ENCODE measurements at regions of chr5 and their contacts with region 1.

Region 1: GRCh38 chr5:59039296-59040023 is 456.6 kb downstream of the RAB3C start:
- DNase-seq: peak; percentile 90
- H3K4me3 Mint-ChIP-seq: peak overlapping the region; percentile 94
- H3K27ac Mint-ChIP-seq: peak overlapping the region; percentile 96
- H3K4me1 Mint-ChIP-seq: peaks cover 44% of the 10 kb centered on the region
- H3K27me3 Mint-ChIP-seq: no peaks in the 10 kb centered on the region

Region 2: DNA sequence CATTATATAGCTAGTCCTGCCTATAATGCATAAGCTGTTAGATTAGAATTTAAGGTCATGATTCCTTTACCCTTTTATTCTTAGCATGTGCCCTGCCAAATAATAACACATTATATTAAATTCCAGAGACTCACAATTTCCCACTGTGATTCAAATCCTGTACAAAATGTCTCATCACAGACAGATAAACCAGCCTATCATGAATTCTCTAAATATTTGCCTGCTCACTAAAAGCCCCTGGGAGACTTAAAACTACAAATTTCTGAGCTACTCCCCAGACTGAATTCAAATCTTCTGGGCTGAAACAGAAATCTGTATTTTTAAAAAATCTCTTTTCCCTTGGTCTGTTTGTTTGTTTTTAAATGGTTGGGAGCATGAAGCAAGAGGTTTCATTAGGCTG is 515.5 kb before region 1 on chr5:
- CTCF ChIA-PET with region 1: no interaction called
- intact Hi-C with region 1: no loop called
- DNase-seq: no peak
- H3K4me3 Mint-ChIP-seq: no peak overlapping the region
- H3K27ac Mint-ChIP-seq: no peak overlapping the region
- H3K4me1 Mint-ChIP-seq: no peaks in the 10 kb centered on the region
- H3K27me3 Mint-ChIP-seq: peaks cover 10% of the 10 kb centered on the region

Region 3: DNA sequence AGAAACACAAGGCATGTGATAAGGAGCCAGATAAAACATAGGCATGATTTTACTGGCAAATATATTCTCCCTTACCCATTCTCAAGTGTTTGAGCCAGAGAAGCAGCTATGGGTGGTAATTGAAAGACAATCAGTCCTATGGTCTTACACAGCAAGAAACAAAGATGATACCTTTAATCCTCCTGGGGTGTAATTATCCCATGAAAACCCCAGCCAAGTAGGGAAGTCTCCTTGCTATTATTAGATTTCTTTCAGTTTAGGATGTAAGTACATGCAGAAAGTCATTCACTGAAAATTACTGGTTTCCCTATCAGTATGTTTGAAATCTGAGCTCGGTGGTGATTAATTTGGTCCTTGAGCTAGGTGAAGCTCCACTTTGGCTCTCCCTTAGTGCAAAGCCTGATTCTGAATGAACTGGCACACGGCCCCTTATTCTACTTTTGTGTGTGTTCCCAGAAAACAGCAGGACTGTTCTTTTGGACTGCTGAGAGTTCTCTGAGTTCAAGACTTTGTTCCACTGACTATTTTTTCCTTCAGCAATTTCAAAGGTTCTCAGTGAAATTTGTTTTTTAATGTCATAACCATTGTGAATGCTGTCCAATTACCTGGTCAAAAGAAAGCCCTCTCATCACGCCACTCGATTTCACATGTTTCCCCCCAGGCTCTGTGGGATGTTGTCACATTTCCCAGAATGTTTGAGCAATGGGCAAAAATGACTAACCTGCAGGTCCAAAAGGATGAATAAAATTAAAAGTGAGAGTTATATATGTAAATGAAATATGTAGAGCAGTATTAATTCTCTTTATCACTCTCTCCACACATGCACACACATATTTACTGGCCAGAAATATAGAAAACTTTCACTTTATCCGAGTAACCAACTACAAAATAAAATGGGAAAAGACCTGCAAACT is 113.6 kb before region 1 on chr5:
- CTCF ChIA-PET with region 1: no interaction called
- intact Hi-C with region 1: loop called (anchors 1 kb)
- DNase-seq: peak; percentile 43
- H3K4me3 Mint-ChIP-seq: peak overlapping the region; percentile 39
- H3K27ac Mint-ChIP-seq: peak overlapping the region; percentile 84
- H3K4me1 Mint-ChIP-seq: peaks cover 39% of the 10 kb centered on the region
- H3K27me3 Mint-ChIP-seq: peaks cover 2% of the 10 kb centered on the region

Region 4: DNA sequence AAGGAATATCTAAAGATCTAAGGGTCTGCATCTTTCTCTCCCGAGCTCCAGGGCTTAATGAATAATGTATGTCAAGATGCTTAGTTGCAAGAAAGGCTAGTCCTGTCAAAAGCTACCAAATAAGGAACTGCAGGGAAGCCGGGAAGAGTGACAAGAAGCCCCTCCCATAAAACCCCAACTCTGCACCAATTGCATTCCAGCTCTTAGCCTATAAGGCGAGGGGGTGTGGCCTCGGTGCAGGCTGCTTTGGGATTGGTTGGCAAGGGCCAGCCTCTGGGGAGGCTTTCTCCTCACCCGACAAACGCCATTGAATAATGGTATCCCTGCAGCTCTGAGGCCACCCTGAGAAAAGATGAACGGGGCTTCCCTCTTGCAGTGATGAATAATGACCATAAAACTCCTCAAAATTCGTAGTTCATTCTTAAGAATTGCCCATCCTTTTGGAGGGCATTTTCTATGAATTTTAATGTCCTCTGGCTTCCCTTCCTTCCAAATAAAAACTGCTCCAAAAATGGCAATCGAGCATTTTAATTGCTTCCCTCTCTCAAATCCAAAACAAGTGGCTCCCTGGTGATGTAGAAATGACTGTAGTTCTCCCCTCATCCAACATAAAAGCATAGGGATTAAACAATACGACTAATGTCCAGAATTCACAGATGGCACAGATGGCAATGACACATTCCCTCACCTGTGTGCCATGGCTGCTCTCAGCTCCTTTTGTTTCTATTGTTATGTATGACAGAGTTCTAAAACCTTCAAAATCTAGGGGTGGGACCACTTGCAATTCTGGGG is 39.5 kb before region 1 on chr5:
- CTCF ChIA-PET with region 1: no interaction called
- intact Hi-C with region 1: loop called (anchors 1 kb)
- DNase-seq: no peak
- H3K4me3 Mint-ChIP-seq: no peak overlapping the region
- H3K27ac Mint-ChIP-seq: no peak overlapping the region
- H3K4me1 Mint-ChIP-seq: peaks cover 52% of the 10 kb centered on the region
- H3K27me3 Mint-ChIP-seq: no peaks in the 10 kb centered on the region

Region 5: DNA sequence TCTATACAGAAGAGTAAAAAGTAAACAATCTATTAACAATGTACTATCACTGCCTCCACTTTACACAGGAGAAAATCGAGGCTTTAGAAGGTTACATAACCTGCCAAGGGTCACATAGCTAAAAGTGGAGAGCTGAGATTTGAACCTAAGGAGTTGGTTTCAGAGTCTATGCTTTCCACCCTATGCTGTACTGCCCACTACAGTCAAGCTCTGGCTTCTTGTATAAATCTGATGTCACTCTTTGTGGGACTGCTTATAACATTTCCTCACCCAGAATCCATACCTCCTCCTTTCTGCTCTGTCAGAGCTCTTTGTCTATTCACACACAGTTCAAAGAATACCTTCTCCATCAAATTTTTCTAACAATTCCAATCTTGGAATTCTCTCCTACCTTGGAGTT is 46.6 kb after region 1 on chr5:
- CTCF ChIA-PET with region 1: interaction called, 13 read pairs
- intact Hi-C with region 1: no loop called
- DNase-seq: no peak
- H3K4me3 Mint-ChIP-seq: no peak overlapping the region
- H3K27ac Mint-ChIP-seq: no peak overlapping the region
- H3K4me1 Mint-ChIP-seq: no peaks in the 10 kb centered on the region
- H3K27me3 Mint-ChIP-seq: no peaks in the 10 kb centered on the region

Region 6: GRCh38 chr5:59126708-59127573 is 87.5 kb after region 1 on chr5:
- CTCF ChIA-PET with region 1: interaction called, 32 read pairs
- intact Hi-C with region 1: loop called (anchors 1 kb)
- DNase-seq: no peak
- H3K4me3 Mint-ChIP-seq: no peak overlapping the region
- H3K27ac Mint-ChIP-seq: no peak overlapping the region
- H3K4me1 Mint-ChIP-seq: peaks cover 27% of the 10 kb centered on the region
- H3K27me3 Mint-ChIP-seq: no peaks in the 10 kb centered on the region

Region 7: GRCh38 chr5:59174248-59174844 is 134.9 kb after region 1 on chr5:
- CTCF ChIA-PET with region 1: interaction called, 75 read pairs
- intact Hi-C with region 1: loop called (anchors 1 kb)
- DNase-seq: peak; percentile 48
- H3K4me3 Mint-ChIP-seq: no peak overlapping the region
- H3K27ac Mint-ChIP-seq: no peak overlapping the region
- H3K4me1 Mint-ChIP-seq: peaks cover 10% of the 10 kb centered on the region
- H3K27me3 Mint-ChIP-seq: no peaks in the 10 kb centered on the region

Measured in activated naive CD4-positive, alpha-beta T cell treated with anti-CD3 and anti-CD28 coated beads for 36 hours (primary cell).